ENCODE measurements at regions of chr1 and their contacts with region 1.

Region 1: GRCh38 chr1:184036517-184036949 is 995 bp downstream of the COLGALT2 start:
- DNase-seq: peak; percentile 21
- ATAC-seq: peak; percentile 9
- H3K4me3 Mint-ChIP-seq: peak overlapping the region; percentile 65
- H3K27ac Mint-ChIP-seq: no peak overlapping the region
- H3K4me1 Mint-ChIP-seq: peaks cover 9% of the 10 kb centered on the region
- H3K27me3 Mint-ChIP-seq: peaks cover 54% of the 10 kb centered on the region
- CTCF ChIP-seq: no peak

Region 2: GRCh38 chr1:183942933-183943693 is 93.4 kb before region 1 on chr1:
- CTCF ChIA-PET with region 1: no interaction called
- POLR2A ChIA-PET with region 1: no interaction called
- intact Hi-C with region 1: no loop called
- DNase-seq: no peak
- ATAC-seq: peak; percentile 39
- H3K4me3 Mint-ChIP-seq: no peak overlapping the region
- H3K27ac Mint-ChIP-seq: no peak overlapping the region
- H3K4me1 Mint-ChIP-seq: no peaks in the 10 kb centered on the region
- H3K27me3 Mint-ChIP-seq: no peaks in the 10 kb centered on the region
- CTCF ChIP-seq: no peak

Region 3: DNA sequence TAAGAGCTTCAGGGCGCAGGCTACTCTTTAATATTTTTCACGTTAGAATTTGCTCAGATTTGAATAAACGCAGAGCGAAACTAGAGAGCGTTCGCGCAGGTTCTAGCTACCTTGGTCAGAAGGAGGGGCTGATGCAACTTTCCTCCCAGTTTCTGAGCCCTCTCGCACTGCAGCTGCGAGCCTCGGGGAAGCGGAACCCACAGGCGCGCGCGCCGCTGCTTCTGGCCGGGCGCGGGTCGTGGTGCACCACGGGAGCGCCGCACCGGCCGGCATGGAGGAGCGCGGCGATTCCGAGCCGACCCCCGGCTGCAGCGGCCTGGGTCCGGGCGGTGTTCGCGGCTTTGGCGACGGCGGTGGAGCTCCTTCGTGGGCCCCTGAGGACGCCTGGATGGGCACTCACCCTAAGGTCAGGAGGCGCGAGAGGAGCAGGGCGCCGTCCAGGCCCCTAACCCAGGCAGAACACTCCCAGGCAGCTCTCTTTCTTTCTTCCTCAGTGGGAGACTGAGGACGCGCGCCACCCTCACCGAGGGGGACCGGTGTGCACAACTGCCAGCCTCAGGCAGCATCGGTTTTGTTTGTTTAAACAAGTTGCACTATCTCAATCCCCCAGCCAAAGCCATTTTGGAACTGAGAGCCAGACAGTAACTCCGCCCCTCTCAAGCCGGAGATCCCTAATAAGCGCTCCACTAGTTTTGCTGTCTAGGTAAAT is 15.1 kb after region 1 on chr1 and contains the start of gene TSEN15:
- CTCF ChIA-PET with region 1: interaction called, 3 read pairs
- POLR2A ChIA-PET with region 1: interaction called, 41 read pairs
- intact Hi-C with region 1: no loop called
- DNase-seq: peak; percentile 86
- ATAC-seq: peak; percentile 93
- H3K4me3 Mint-ChIP-seq: peak within 1 kb of the TSS; percentile 86
- H3K27ac Mint-ChIP-seq: peak within 1 kb of the TSS; percentile 98
- H3K4me1 Mint-ChIP-seq: peaks cover 35% of the 10 kb centered on the region
- H3K27me3 Mint-ChIP-seq: peaks cover 6% of the 10 kb centered on the region
- CTCF ChIP-seq: no peak
- total RNA-seq, gene TSEN15: 48.2 to 49.1 TPM

Measured in activated CD8-positive, alpha-beta T cell treated with anti-CD3 and anti-CD28 coated beads for 36 hours (primary cell).